ENCODE measurements at regions of chr11 and their contacts with region 1.

Region 1: DNA sequence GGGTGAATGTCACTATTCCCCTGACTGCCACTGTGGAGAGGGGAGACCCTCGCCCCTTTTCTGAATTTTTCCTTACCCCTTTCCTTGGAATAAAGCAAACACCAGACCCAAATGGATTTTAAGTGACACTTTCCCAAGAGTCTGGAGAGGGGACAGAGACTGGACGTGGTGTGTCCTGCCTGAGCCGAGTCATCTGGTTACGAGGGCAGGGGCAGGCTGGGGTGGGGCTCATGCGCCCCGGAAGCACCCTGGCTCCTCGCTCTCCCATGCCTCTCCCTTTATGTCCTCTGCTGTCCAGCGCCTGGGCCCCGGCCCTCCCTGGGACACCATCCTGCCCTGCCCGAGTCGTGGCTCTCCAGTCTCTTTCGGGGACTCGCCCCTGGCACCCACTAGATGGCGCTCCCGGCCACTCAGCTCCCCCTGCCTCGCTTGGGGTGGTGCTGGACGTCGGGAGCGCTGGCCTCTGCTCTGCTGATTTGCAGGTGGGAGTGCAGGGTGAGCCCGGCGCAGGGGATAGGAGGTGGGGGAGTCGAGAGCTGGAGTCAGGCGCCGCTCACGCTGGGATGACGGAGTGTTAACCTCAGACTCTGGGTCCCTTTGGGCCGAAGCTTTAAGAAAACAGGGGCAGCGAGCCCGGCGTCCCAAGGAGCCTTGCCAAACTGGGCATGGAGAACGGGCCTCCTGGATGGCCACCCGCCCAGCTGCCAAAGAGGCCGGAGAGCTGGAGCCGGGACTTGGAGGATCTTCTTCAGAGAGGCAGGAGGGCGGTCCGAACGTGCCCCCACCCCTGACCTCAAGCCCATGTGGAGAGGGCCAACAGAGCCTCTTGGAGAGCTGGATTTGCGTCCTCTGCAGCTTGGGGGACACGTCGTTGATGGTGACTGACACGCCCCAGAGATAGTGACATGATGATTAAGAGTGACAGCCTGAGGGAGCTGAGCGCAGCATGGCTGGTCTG is 89.9 kb downstream of the RPS6KA4 start:
- DNase-seq: peak; percentile 76
- H3K27ac ChIP-seq: no peak overlapping the region
- CTCF ChIP-seq: peak; percentile 88

Region 2: DNA sequence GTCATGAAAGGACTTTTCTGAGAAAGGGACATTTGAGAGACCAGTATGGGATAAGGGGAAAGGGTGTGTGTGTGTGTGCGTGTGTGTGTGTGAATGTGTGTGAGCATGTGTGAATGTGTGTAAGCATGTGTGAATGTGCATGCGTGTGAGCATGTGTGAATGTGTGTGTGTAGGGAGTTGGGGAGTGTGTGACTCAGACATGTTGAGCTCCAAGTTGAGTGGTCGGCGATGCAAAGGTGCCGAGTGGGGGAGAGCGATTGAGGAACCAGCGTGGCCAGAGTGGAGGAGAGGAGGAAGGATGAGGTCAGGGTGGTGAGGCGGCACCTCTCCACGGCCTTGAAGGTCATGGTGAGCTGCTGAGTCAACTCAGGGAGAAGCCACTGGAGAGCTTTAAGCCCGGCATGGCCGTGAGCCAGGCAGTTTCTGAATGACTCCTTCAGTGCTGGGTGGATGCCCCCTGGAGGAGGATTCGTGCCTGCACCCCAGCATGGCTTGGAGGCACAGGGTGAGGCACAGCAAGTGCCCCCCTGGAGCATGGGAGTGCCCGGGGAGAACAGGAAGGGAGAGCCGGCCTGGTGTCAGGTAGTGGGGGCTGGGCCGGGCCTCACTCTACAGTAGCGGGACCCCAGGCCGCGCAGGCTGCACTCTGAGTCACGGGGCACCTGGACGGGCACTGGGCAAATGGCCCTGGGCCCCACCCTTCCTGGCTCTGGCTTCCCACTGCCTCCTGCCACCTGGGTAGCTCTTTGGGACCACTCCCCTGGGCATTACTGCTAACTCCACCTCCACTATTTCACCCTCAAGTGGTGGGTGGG is 117.1 kb before region 1 on chr11:
- CTCF ChIA-PET with region 1: no interaction called
- POLR2A ChIA-PET with region 1: no interaction called
- DNase-seq: peak; percentile 85
- H3K27ac ChIP-seq: peak overlapping the region; percentile 98
- CTCF ChIP-seq: peak; percentile 75

Region 3: DNA sequence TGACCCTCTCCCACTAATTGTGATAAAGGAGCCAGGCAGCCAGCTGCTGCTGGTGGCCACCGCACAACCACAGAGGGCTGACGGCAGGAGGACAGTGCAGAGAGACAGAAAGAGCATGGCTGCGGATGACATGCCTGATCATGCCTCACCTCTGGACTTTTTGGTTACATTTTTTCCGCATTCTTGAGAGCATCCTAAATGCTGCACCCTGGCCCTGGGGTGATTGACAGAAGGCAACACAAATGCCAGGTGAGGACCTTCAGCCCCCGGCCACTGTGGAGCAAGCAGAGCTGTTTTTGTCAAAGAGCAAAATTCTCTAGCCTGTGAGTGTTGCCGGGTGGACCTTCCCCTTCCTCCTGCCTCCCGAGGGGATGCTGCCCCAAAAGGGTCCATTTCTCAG is 11.5 kb before region 1 on chr11:
- CTCF ChIA-PET with region 1: interaction called, 10 read pairs
- POLR2A ChIA-PET with region 1: no interaction called
- DNase-seq: peak; percentile 27
- H3K27ac ChIP-seq: no peak overlapping the region
- CTCF ChIP-seq: no peak

Region 4: GRCh38 chr11:64652586-64653387 is 203.9 kb after region 1 on chr11:
- CTCF ChIA-PET with region 1: interaction called, 37 read pairs
- POLR2A ChIA-PET with region 1: no interaction called
- DNase-seq: peak; percentile 89
- H3K27ac ChIP-seq: no peak overlapping the region
- CTCF ChIP-seq: peak; percentile 86

Measured in RWPE1 (cell line).